Posterior cingulate gyrus (tissue), 11 donors: ENCODE measurements at regions of chr1 and their contacts with region 1.

Region 1: GRCh38 chr1:244874974-244875579 is 10.7 kb upstream of the HNRNPU start:
- DNase-seq: no peak

Region 2: GRCh38 chr1:244964112-244964971 is 89.3 kb after region 1 on chr1:
- intact Hi-C with region 1: loop called (anchors 5 kb)
- DNase-seq: peak in 2 of 10 donors; percentile 21 to 22